Caco-2 (cell line): ENCODE measurements at regions of chr2 and their contacts with region 1.

Region 1: DNA sequence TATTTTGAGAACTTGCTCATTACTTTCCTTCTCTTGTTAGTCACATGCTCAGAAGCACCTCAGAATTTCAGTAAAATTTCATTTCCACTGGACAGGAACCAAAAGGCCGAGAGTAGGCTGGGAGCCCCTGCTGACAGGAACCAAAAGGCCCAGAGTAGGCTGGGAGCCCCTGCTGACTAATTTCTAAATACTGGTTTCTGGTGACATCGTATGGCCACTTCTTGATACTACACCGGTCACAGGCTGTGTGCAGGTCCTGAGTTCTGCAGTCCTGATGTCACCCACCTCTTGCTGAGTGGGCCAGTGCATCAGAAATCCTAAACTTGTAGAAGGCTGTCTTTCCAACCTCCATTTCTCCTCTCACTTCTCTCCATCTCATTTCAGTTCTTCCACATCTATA is 17.7 kb upstream of the EN1 start:
- DNase-seq: peak in 1 of 2 experiments; percentile 65
- H3K4me3 ChIP-seq: no peak overlapping the region
- H3K4me3 Mint-ChIP-seq: no peak overlapping the region
- H3K27ac Mint-ChIP-seq: no peak overlapping the region
- H3K4me1 ChIP-seq: no peaks in the 10 kb centered on the region
- H3K4me1 Mint-ChIP-seq: no peaks in the 10 kb centered on the region
- H3K27me3 ChIP-seq: no peaks in the 10 kb centered on the region; the same call in 1 of the 2 replicates
- H3K27me3 Mint-ChIP-seq: peaks cover under 1% of the 10 kb centered on the region
- CTCF ChIP-seq: peak; percentile 76 to 87

Region 2: DNA sequence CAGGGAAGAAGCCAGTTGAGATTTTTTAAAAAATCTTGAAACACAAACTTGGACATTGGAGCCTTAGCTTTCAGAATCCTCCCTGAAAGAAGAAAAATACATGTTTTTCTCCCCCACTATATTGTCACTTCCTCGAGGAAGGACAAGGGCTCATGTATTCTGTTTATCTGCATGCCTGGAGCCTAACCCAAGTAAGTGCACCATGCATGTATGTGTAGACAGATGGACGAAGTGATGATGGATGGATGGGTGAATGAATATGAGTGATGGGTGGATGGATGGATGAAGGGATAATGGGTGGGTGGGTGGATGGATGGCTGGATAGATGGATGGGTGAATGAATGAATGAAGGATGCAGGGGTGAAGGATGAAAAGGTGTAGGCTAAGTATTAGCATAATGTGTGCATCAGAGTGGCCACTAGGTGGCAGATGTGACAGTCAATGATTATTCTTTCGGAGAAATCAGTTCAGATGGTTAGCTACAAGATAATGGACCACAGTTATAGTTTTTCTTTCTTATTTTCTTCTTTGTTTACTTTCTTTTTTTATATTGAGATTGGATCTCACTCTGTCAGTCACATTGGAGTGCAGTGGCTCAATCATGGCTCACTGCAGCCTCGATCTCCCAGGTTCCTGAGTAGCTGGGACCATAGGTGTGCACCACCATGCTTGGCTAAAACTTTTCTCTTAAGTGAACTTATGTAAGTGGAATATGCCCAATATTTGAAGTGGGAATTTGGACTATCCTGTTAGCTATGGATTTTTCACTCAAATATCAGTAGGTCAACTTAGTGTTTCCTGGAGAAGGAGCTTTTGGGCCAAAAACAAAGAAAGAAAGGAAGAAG is 832.7 kb before region 1 on chr2:
- CTCF ChIA-PET with region 1: no interaction called
- POLR2A ChIA-PET with region 1: no interaction called
- intact Hi-C with region 1: loop called (anchors 5 kb)
- DNase-seq: peak in 1 of 2 experiments; percentile 42
- H3K4me3 ChIP-seq: no peak overlapping the region
- H3K4me3 Mint-ChIP-seq: no peak overlapping the region
- H3K27ac Mint-ChIP-seq: no peak overlapping the region
- H3K4me1 ChIP-seq: no peaks in the 10 kb centered on the region
- H3K4me1 Mint-ChIP-seq: no peaks in the 10 kb centered on the region
- H3K27me3 ChIP-seq: no peaks in the 10 kb centered on the region
- H3K27me3 Mint-ChIP-seq: peaks cover 19% of the 10 kb centered on the region
- CTCF ChIP-seq: peak; percentile 71 to 76

Region 3: GRCh38 chr2:118046634-118047210 is 818.4 kb before region 1 on chr2:
- CTCF ChIA-PET with region 1: interaction called, 3 read pairs
- POLR2A ChIA-PET with region 1: no interaction called
- intact Hi-C with region 1: loop called (anchors 1 kb)
- DNase-seq: peak in 1 of 2 experiments; percentile 4
- H3K4me3 ChIP-seq: no peak overlapping the region
- H3K4me3 Mint-ChIP-seq: no peak overlapping the region
- H3K27ac Mint-ChIP-seq: no peak overlapping the region
- H3K4me1 ChIP-seq: no peaks in the 10 kb centered on the region
- H3K4me1 Mint-ChIP-seq: no peaks in the 10 kb centered on the region
- H3K27me3 ChIP-seq: no peaks in the 10 kb centered on the region; the same call in 1 of the 2 replicates
- H3K27me3 Mint-ChIP-seq: peaks cover 20% of the 10 kb centered on the region
- CTCF ChIP-seq: peak; percentile 58 to 70

Region 4: GRCh38 chr2:118202707-118203303 is 662.3 kb before region 1 on chr2:
- CTCF ChIA-PET with region 1: no interaction called
- POLR2A ChIA-PET with region 1: no interaction called
- intact Hi-C with region 1: loop called (anchors 1 kb)
- DNase-seq: peak; percentile 51 to 58
- H3K4me3 ChIP-seq: no peak overlapping the region
- H3K4me3 Mint-ChIP-seq: no peak overlapping the region
- H3K27ac Mint-ChIP-seq: no peak overlapping the region
- H3K4me1 ChIP-seq: no peaks in the 10 kb centered on the region
- H3K4me1 Mint-ChIP-seq: no peaks in the 10 kb centered on the region
- H3K27me3 ChIP-seq: no peaks in the 10 kb centered on the region
- H3K27me3 Mint-ChIP-seq: peaks cover 13% of the 10 kb centered on the region
- CTCF ChIP-seq: peak; percentile 73 to 90

Region 5: GRCh38 chr2:118221666-118222594 is 643.2 kb before region 1 on chr2:
- CTCF ChIA-PET with region 1: no interaction called
- POLR2A ChIA-PET with region 1: no interaction called
- intact Hi-C with region 1: loop called (anchors 1 kb)
- DNase-seq: peak in 1 of 2 experiments; percentile 63
- H3K4me3 ChIP-seq: no peak overlapping the region
- H3K4me3 Mint-ChIP-seq: no peak overlapping the region
- H3K27ac Mint-ChIP-seq: no peak overlapping the region
- H3K4me1 ChIP-seq: no peaks in the 10 kb centered on the region
- H3K4me1 Mint-ChIP-seq: no peaks in the 10 kb centered on the region
- H3K27me3 ChIP-seq: peaks cover 4% of the 10 kb centered on the region
- H3K27me3 Mint-ChIP-seq: peaks cover 23% of the 10 kb centered on the region
- CTCF ChIP-seq: peak; percentile 67 to 72

Region 6: DNA sequence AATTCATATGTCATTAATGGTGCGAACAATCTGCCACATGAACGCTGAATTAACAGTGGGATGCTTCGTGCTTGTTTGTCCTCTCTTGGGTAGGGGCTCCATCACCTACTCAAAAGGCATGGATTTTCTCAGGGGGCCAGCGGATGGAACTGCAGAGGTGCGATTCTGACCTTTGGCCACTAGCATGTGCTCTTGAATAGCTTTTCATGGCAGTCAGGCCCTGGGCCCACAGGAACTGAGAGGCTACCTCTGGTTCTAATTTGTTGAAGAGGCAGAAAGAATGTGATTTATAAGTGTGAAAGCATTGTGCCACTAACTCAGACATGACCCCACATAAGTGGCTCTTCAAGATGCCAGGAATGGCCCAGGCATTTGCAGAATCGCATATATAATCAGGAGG is 493.6 kb before region 1 on chr2:
- CTCF ChIA-PET with region 1: interaction called, 6 read pairs
- POLR2A ChIA-PET with region 1: no interaction called
- intact Hi-C with region 1: loop called (anchors 1 kb)
- DNase-seq: peak; percentile 43 to 48
- H3K4me3 ChIP-seq: no peak overlapping the region
- H3K4me3 Mint-ChIP-seq: no peak overlapping the region
- H3K27ac Mint-ChIP-seq: no peak overlapping the region
- H3K4me1 ChIP-seq: no peaks in the 10 kb centered on the region
- H3K4me1 Mint-ChIP-seq: no peaks in the 10 kb centered on the region
- H3K27me3 ChIP-seq: no peaks in the 10 kb centered on the region; the same call in 1 of the 2 replicates
- H3K27me3 Mint-ChIP-seq: peaks cover 12% of the 10 kb centered on the region
- CTCF ChIP-seq: peak; percentile 77 to 90

Region 7: GRCh38 chr2:118492335-118492734 is 372.8 kb before region 1 on chr2:
- CTCF ChIA-PET with region 1: no interaction called
- POLR2A ChIA-PET with region 1: no interaction called
- intact Hi-C with region 1: loop called (anchors 1 kb)
- DNase-seq: no peak
- H3K4me3 ChIP-seq: no peak overlapping the region
- H3K4me3 Mint-ChIP-seq: no peak overlapping the region
- H3K27ac Mint-ChIP-seq: no peak overlapping the region
- H3K4me1 ChIP-seq: no peaks in the 10 kb centered on the region
- H3K4me1 Mint-ChIP-seq: no peaks in the 10 kb centered on the region
- H3K27me3 ChIP-seq: peaks cover under 1% of the 10 kb centered on the region; the same call in 1 of the 2 replicates
- H3K27me3 Mint-ChIP-seq: peaks cover 31% of the 10 kb centered on the region
- CTCF ChIP-seq: peak in 1 of 2 experiments; percentile 30

Region 8: DNA sequence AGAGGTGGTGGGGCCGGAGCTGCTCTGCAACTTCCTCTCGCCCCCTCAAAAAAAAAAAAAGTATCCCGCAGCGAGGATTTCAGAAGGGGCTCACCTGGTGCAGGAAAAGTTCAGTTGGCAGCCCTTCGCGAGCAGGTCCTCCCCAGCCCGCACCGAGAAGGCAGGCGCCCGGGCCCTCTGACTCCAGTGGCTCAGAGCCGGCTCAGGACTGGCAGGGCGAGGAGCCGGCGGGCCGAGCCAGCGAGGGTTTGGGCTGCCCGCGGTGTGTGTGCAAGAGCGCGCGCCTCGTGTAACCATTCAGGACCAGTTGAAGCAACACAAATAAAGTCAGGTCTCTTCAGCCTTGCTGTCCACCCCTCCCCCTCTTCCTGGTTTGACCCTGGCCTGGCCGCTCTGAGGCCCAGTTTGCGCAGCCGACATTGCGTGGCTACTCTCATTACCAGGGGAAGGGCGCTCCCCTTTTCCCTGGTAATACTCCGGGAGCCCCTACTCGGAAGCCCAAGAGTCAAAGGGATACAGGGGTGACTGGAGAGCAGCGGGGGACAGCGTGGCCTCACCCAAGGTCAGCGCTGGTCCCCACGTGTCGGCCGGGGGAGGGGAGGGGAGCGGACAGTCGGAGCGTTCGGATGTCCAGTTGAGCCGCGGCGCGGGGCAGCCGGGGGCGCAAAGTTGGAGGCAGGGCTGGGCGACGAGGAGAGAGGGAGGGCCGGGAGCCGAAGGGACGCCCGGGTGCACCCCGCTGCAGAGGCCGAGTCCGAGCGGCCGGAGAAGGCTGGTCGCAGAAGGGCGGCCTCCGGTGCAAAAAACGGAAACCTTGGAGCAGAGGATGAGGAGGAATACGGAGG is 30.0 kb before region 1 on chr2:
- CTCF ChIA-PET with region 1: no interaction called
- POLR2A ChIA-PET with region 1: no interaction called
- intact Hi-C with region 1: no loop called
- DNase-seq: peak in 1 of 2 experiments; percentile 21
- H3K4me3 ChIP-seq: no peak overlapping the region
- H3K4me3 Mint-ChIP-seq: no peak overlapping the region
- H3K27ac Mint-ChIP-seq: no peak overlapping the region
- H3K4me1 ChIP-seq: no peaks in the 10 kb centered on the region
- H3K4me1 Mint-ChIP-seq: no peaks in the 10 kb centered on the region
- H3K27me3 ChIP-seq: peaks cover 2% of the 10 kb centered on the region; the same call in 1 of the 2 replicates
- H3K27me3 Mint-ChIP-seq: peaks cover 2% of the 10 kb centered on the region
- CTCF ChIP-seq: no peak

Region 9: GRCh38 chr2:118954297-118955060 is 89.4 kb after region 1 on chr2:
- CTCF ChIA-PET with region 1: no interaction called
- POLR2A ChIA-PET with region 1: no interaction called
- intact Hi-C with region 1: no loop called
- DNase-seq: no peak
- H3K4me3 ChIP-seq: no peak overlapping the region
- H3K4me3 Mint-ChIP-seq: no peak overlapping the region
- H3K27ac Mint-ChIP-seq: no peak overlapping the region
- H3K4me1 ChIP-seq: peaks cover 4% of the 10 kb centered on the region; the same call in 1 of the 2 replicates
- H3K4me1 Mint-ChIP-seq: peaks cover 8% of the 10 kb centered on the region
- H3K27me3 ChIP-seq: no peaks in the 10 kb centered on the region
- H3K27me3 Mint-ChIP-seq: no peaks in the 10 kb centered on the region
- CTCF ChIP-seq: no peak